Activated CD4-positive, alpha-beta T cell treated with anti-CD3 and anti-CD28 coated beads for 36 hours (primary cell): ENCODE measurements at regions of chr3 and their contacts with region 1.

Region 1: DNA sequence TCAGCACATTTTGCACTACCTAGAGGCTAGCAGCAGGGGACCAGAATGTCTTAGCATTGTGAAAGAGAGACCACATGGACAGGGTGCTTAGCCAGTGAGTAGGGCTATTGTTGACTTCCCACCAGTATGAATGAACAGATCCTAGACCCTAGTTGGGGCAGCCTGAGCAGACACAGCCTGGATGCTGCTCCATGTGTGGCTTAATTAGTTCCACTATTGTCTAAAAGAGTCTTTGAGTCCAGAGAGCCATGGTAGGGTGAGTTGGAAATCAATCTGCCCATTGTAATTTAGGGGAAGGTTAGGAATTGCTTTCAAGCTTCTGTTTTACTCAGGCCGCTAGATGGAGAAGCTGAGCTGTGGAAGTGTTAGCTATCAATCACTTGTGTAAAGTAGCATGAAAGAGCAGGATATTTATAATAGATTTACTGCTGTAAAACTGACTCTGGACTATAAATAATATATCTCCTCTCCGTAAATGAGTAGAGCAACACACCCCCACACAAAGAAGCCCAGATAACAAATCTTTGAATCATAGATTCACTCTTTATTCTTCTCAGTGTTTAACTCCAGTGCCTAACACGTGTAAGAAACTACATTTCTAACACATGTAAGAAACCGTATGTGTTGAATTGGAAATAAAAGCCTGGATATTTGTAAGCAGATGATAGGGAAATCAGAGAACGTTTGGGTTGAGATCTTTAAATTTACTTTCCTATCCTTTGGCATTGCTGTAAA is 4.1 kb upstream of the GCSAM start:
- DNase-seq: peak; percentile 68
- ATAC-seq: no peak
- H3K4me3 Mint-ChIP-seq: no peak overlapping the region
- H3K27ac Mint-ChIP-seq: no peak overlapping the region
- H3K4me1 Mint-ChIP-seq: peaks cover 65% of the 10 kb centered on the region
- H3K27me3 Mint-ChIP-seq: no peaks in the 10 kb centered on the region

Region 2: GRCh38 chr3:111473316-111473949 is 663.7 kb before region 1 on chr3:
- CTCF ChIA-PET with region 1: no interaction called
- POLR2A ChIA-PET with region 1: no interaction called
- intact Hi-C with region 1: no loop called
- DNase-seq: peak; percentile 26
- ATAC-seq: no peak
- H3K4me3 Mint-ChIP-seq: no peak overlapping the region
- H3K27ac Mint-ChIP-seq: no peak overlapping the region
- H3K4me1 Mint-ChIP-seq: no peaks in the 10 kb centered on the region
- H3K27me3 Mint-ChIP-seq: peaks cover 2% of the 10 kb centered on the region

Region 3: GRCh38 chr3:112293368-112294321 is 156.5 kb after region 1 on chr3 and contains the start of gene SLC9C1:
- CTCF ChIA-PET with region 1: interaction called, 26 read pairs
- POLR2A ChIA-PET with region 1: no interaction called
- intact Hi-C with region 1: loop called (anchors 5 kb)
- DNase-seq: peak; percentile 52
- ATAC-seq: peak; percentile 81
- H3K4me3 Mint-ChIP-seq: peak within 1 kb of the TSS; percentile 53
- H3K27ac Mint-ChIP-seq: peak within 1 kb of the TSS; percentile 38
- H3K4me1 Mint-ChIP-seq: peaks cover 21% of the 10 kb centered on the region
- H3K27me3 Mint-ChIP-seq: no peaks in the 10 kb centered on the region
- total RNA-seq, gene SLC9C1: not detected

Region 4: GRCh38 chr3:112327371-112327951 is 190.3 kb after region 1 on chr3:
- CTCF ChIA-PET with region 1: interaction called, 8 read pairs
- POLR2A ChIA-PET with region 1: no interaction called
- intact Hi-C with region 1: loop called in 1 of 2 experiments (anchors 5 kb)
- DNase-seq: peak; percentile 54
- ATAC-seq: peak; percentile 100
- H3K4me3 Mint-ChIP-seq: no peak overlapping the region
- H3K27ac Mint-ChIP-seq: no peak overlapping the region
- H3K4me1 Mint-ChIP-seq: peaks cover 4% of the 10 kb centered on the region
- H3K27me3 Mint-ChIP-seq: peaks cover 7% of the 10 kb centered on the region

Region 5: GRCh38 chr3:112519424-112520001 is 382.4 kb after region 1 on chr3:
- CTCF ChIA-PET with region 1: no interaction called
- POLR2A ChIA-PET with region 1: no interaction called
- intact Hi-C with region 1: loop called (anchors 1 kb)
- DNase-seq: peak; percentile 37
- ATAC-seq: peak; percentile 77
- H3K4me3 Mint-ChIP-seq: no peak overlapping the region
- H3K27ac Mint-ChIP-seq: no peak overlapping the region
- H3K4me1 Mint-ChIP-seq: peaks cover 22% of the 10 kb centered on the region
- H3K27me3 Mint-ChIP-seq: no peaks in the 10 kb centered on the region

Region 6: DNA sequence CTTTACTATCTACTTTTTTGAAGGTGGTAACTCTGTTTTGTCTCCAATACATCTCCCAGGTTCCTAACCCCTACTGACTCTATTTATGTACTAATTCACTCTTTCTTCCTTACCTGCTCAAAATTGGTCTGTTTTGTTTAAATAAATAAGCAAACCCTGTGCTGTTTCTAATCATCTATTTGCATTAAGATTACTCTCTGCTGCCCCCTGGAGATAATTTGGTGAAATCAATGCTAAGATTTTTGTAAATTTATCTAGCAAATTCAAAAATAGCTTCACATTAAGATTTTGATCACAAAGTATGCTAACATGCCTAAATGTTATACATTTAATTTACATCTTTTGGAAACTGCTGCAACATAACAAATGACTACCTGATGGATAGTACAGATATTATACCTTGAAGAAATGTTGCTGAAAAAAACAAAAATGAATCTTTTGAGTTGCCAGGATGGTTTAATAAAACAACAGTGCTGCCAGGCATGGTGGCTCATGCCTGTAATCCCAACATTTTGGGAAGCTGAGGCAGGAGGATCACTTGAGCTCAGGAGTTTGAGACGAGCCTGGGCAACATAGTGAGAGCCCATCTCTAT is 842.2 kb after region 1 on chr3:
- CTCF ChIA-PET with region 1: no interaction called
- POLR2A ChIA-PET with region 1: no interaction called
- intact Hi-C with region 1: loop called in 1 of 2 experiments (anchors 10 kb)
- DNase-seq: no peak
- ATAC-seq: no peak
- H3K4me3 Mint-ChIP-seq: no peak overlapping the region
- H3K27ac Mint-ChIP-seq: no peak overlapping the region
- H3K4me1 Mint-ChIP-seq: peaks cover 73% of the 10 kb centered on the region
- H3K27me3 Mint-ChIP-seq: no peaks in the 10 kb centered on the region